GM10248 (cell line): ENCODE measurements at regions of chr10 and their contacts with region 1.

Region 1: DNA sequence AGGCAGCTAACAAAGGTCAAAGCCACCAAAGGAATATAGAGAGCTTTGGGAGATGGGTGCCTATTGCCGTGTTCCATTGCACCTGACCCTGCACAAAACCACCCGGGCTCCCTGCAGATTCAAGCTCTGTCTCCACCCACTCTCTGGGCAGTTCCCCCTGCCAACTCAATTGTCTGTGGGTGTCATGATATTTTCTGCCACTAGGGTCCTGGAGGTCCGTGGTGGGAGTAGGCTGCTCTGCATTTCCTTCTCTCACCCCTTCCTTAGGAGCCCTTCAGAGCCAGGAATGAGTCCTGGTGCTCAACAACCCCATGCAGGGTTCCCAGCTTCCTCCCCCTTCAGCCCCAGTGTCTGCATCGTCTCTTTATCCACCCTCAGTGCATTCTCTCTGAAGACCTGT is 34.1 kb downstream of the PNLIPRP2 start:
- DNase-seq: no peak
- CTCF ChIP-seq: no peak

Region 2: DNA sequence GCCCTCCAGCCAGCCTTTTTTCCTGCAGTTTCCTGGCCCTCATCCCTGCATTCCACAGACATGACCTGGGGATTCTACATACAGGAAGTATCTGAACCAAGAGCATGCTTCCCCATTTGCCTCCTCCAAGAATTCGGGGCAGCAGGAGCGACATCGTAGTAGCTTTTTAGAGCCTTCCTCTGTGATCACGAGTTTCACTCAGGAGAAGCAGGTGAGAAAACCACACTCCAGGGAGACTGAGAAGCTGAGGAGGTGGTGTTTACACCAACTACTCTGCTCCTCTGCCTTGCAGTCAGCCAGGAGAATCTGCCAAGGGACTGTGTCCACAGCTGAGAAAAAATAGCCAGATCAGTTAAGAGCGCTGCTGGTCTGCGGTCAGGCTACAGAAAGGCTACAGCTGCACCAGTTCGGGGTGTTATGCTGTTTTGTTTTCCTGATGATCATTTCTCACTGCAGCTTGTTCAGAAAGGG is 33.5 kb after region 1 on chr10:
- CTCF ChIA-PET with region 1: interaction called, 12 read pairs
- POLR2A ChIA-PET with region 1: no interaction called
- DNase-seq: no peak
- CTCF ChIP-seq: no peak